ENCODE measurements at regions of chr16 and their contacts with region 1.

Region 1: DNA sequence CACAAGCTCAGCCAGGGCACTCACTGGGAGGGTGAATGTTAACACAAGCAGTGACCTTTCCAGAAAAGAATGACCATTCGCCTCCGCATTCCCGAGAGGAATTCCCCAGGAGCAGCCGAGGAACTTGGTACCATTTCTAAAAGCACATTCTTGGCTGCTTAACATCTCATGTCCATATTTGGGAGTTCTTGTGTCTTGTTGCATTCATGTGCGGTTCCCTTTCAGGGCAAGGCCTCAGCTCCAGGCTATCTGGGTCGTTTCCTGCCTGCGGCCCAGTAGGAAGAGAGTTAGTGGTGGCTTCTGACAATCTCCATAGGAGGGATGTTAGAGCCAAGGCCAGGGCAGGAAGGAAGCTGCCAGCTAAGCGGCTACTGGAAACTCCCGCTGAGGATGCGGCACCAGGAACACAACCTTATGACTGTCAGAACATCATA is 27.8 kb upstream of the MEAK7 start:
- DNase-seq: peak; percentile 98
- ATAC-seq: peak; percentile 98
- H3K4me3 ChIP-seq: no peak overlapping the region
- H3K27ac ChIP-seq: peak overlapping the region; percentile 85
- H3K4me1 ChIP-seq: peaks cover 12% of the 10 kb centered on the region
- H3K27me3 ChIP-seq: no peaks in the 10 kb centered on the region
- CTCF ChIP-seq: no peak
- POLR2A ChIP-seq: no peak
- RAD21 ChIP-seq: no peak

Region 2: GRCh38 chr16:84599521-84600202 is 67.4 kb after region 1 on chr16:
- CTCF ChIA-PET with region 1: no interaction called
- POLR2A ChIA-PET with region 1: no interaction called
- dilution Hi-C with region 1: no loop called
- in situ Hi-C with region 1: no loop called
- intact Hi-C with region 1: loop called (anchors 5 kb)
- DNase-seq: peak; percentile 85
- ATAC-seq: peak; percentile 38
- H3K4me3 ChIP-seq: peak overlapping the region; percentile 3; the same call in 1 of the 2 replicates
- H3K27ac ChIP-seq: peak overlapping the region; percentile 87
- H3K4me1 ChIP-seq: peaks cover 53% of the 10 kb centered on the region
- H3K27me3 ChIP-seq: no peaks in the 10 kb centered on the region
- CTCF ChIP-seq: no peak
- POLR2A ChIP-seq: no peak
- RAD21 ChIP-seq: no peak; the same call in 1 of the 2 replicates

Region 3: DNA sequence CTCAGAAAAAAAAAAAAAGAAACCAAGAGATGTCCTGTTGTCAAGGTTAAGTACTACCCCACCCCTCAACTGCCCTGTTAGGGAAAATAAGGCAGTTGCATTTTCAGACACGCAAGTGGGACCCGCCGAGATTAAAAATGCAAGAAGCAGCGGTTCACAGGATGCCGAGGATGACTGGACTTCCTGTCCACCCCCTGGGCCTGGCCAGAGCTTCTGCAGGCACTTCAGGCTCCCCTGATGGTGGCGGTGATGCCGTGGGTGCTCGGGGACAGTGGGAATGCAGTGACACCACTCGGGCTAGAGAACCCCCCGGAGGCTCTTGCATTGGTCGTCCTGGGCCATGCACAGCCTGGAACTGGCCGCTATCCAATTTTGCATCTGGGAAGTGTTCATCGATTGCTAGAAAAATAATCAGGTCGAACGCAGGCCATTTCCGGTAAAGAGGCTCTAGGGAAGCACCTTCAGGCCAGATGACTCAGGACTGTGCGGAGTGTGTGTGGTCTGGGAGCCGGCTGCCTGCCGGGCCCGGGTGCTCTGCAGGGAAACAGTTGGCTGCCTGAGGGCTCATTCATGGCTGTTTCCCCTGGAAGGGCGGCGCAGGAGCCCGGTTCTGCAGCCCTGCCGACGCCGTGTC is 274.1 kb after region 1 on chr16:
- CTCF ChIA-PET with region 1: no interaction called
- POLR2A ChIA-PET with region 1: no interaction called
- dilution Hi-C with region 1: no loop called
- in situ Hi-C with region 1: no loop called
- intact Hi-C with region 1: no loop called
- DNase-seq: peak; percentile 95
- ATAC-seq: peak; percentile 95
- H3K4me3 ChIP-seq: no peak overlapping the region
- H3K27ac ChIP-seq: peak overlapping the region; percentile 63
- H3K4me1 ChIP-seq: peaks cover 9% of the 10 kb centered on the region
- H3K27me3 ChIP-seq: no peaks in the 10 kb centered on the region
- CTCF ChIP-seq: no peak
- POLR2A ChIP-seq: no peak
- RAD21 ChIP-seq: 0 out of 2 replicates have a peak, but pooled peaks have one; percentile 5

Region 4: GRCh38 chr16:85004559-85005205 is 472.4 kb after region 1 on chr16:
- CTCF ChIA-PET with region 1: no interaction called
- POLR2A ChIA-PET with region 1: no interaction called
- dilution Hi-C with region 1: no loop called
- in situ Hi-C with region 1: no loop called
- intact Hi-C with region 1: no loop called
- DNase-seq: peak; percentile 95
- ATAC-seq: peak; percentile 88
- H3K4me3 ChIP-seq: no peak overlapping the region
- H3K27ac ChIP-seq: peak overlapping the region; percentile 98
- H3K4me1 ChIP-seq: peaks cover 47% of the 10 kb centered on the region
- H3K27me3 ChIP-seq: no peaks in the 10 kb centered on the region
- CTCF ChIP-seq: no peak
- POLR2A ChIP-seq: no peak; the same call in 1 of the 2 replicates
- RAD21 ChIP-seq: no peak

Region 5: DNA sequence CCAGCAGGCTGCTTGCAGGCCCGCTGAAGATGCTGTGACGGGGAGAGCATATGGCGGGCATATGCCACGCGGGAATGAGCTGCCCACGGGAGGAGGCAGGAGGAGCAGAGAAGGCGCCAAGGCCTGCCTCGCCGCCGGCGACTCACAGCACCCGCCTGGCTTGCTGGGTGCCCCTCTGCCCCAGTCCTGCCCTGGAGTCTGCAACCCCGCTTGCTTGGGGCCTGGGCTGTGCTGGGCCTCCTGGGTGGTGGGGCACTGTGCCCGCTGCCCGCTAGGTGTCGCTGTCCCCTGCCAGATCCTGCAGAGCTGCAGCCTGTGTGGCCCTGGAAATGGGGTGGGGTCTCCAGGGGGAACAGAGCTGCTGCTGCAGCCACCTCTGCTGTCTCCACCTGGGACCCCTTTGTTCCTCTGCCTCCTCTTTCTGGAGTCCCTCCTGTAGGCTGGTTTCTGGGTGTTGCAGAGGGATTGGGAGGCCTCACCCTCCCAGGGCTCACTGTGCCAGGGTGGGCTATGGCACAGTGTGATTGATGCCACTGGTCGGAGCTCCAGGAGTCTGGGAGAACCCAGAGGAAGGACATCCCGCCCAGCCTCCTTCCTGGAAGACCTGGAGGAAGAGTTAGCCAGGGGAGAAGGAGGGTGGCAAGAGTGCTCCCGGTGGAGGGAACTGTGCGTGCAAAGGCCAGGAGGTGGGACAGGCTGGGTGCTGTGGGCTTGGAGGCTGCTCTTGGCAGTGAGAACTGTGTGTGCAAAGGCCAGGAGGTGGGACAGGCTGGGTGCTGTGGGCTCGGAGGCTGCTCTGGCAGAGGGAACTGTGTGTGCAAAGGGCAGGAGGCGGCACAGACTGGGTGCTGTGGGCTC is 721.0 kb after region 1 on chr16:
- CTCF ChIA-PET with region 1: no interaction called
- POLR2A ChIA-PET with region 1: no interaction called
- dilution Hi-C with region 1: no loop called
- in situ Hi-C with region 1: no loop called
- intact Hi-C with region 1: no loop called
- DNase-seq: peak; percentile 29
- ATAC-seq: peak; percentile 89
- H3K4me3 ChIP-seq: no peak overlapping the region
- H3K27ac ChIP-seq: no peak overlapping the region
- H3K4me1 ChIP-seq: peaks cover 4% of the 10 kb centered on the region; the same call in 1 of the 2 replicates
- H3K27me3 ChIP-seq: no peaks in the 10 kb centered on the region
- CTCF ChIP-seq: peak; percentile 69
- POLR2A ChIP-seq: no peak
- RAD21 ChIP-seq: peak; percentile 61